Aorta (tissue), 5 donors: ENCODE measurements at regions of chr9 and their contacts with region 1.

Region 1: DNA sequence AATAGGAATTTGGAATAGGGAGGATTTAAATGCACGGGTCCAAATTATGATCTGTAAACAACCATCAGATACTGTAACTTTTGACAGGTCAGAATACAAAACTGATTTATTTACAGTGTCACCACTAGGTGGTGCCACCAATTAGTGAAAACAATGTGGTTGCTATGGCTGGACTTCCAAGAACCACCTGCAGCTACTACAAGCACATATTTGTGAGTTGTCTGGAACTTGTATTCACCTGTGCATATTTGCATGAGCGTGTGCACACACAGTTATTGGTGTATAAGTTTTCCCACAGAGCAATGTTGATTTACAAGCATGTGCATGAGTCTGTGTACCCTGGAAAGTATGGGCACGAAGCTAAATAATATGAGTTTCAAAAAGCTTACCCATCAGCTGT is 3.0 kb upstream of the HRCT1 start:
- DNase-seq: no peak
- ATAC-seq: no peak
- H3K4me3 ChIP-seq: no peak overlapping the region
- H3K27ac ChIP-seq: no peak overlapping the region
- H3K4me1 ChIP-seq: peaks cover 0 to under 1% of the 10 kb centered on the region in 2 donors
- H3K27me3 ChIP-seq: no peaks in the 10 kb centered on the region

Region 2: GRCh38 chr9:35935755-35936509 is 32.9 kb after region 1 on chr9:
- intact Hi-C with region 1: loop called in 1 of 2 experiments (anchors 1 kb)
- DNase-seq: no peak
- ATAC-seq: peak; percentile 66
- H3K4me3 ChIP-seq: no peak overlapping the region
- H3K27ac ChIP-seq: peak overlapping the region in 1 of 2 donors; percentile 96
- H3K4me1 ChIP-seq: peaks cover 0 to 5% of the 10 kb centered on the region in 2 donors
- H3K27me3 ChIP-seq: no peaks in the 10 kb centered on the region

Region 3: GRCh38 chr9:35945341-35946018 is 42.4 kb after region 1 on chr9:
- intact Hi-C with region 1: loop called (anchors 2 kb)
- DNase-seq: peak; percentile 87 to 94
- ATAC-seq: peak; percentile 77
- H3K4me3 ChIP-seq: no peak overlapping the region
- H3K27ac ChIP-seq: peak overlapping the region in 1 of 2 donors; percentile 61
- H3K4me1 ChIP-seq: no peaks in the 10 kb centered on the region
- H3K27me3 ChIP-seq: no peaks in the 10 kb centered on the region

Region 4: DNA sequence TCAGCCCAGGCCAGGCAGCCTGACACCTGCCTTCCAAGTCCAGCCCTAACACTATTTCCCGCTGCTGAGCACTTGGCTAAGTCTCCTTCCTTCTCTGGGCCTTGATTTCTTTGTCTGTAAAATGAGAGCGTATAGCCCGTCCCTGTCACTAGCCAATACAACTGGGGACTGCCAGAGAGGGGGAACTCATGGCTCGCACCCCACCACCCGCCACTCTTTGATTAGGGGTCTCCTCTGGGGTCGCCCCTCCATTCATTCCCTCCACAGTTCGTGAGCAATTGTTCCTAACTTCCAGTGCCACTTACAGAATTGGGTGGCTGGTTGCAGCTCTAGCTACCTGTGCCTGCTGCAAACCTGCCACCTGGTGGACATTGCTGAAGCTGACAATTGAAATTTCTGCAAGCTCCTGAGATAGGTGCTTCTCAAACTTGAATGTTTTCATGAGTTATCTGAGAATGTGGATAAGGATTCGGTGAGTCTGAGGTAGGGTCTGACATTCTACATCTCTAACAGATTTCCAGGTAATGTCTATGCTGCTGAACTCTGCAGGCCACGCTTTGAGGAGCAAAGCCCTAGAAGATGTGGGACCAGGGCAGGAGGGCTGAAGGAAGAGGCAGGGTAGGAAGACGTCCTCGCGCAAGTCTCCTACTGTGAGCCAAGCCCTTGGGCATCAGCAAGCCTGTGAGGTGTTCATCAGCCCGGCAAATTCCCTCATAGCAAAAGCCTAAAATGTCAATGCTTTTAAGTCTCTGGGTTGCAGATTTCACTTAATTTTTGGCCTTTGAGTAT is 120.4 kb after region 1 on chr9:
- intact Hi-C with region 1: loop called (anchors 2 to 5 kb)
- DNase-seq: peak; percentile 72 to 78
- ATAC-seq: peak; percentile 71
- H3K4me3 ChIP-seq: no peak overlapping the region
- H3K27ac ChIP-seq: no peak overlapping the region
- H3K4me1 ChIP-seq: no peaks in the 10 kb centered on the region
- H3K27me3 ChIP-seq: no peaks in the 10 kb centered on the region